Posterior cingulate gyrus (tissue), 11 donors: ENCODE measurements at regions of chr1 and their contacts with region 1.

Region 1: GRCh38 chr1:12184008-12184681 is 17.4 kb downstream of the TNFRSF1B start:
- DNase-seq: peak in 7 of 10 donors; percentile 29 to 93 (median 49)

Region 2: GRCh38 chr1:12143631-12144155 is 40.5 kb before region 1 on chr1:
- intact Hi-C with region 1: loop called (anchors 5 kb)
- DNase-seq: peak in 7 of 10 donors; percentile 20 to 90 (median 40)